Caco-2 (cell line): ENCODE measurements at regions of chr10 and their contacts with region 1.

Region 1: GRCh38 chr10:18699849-18700840 is 40.9 kb downstream of the ARL5B start:
- DNase-seq: no peak
- H3K4me3 ChIP-seq: no peak overlapping the region
- H3K4me3 Mint-ChIP-seq: no peak overlapping the region
- H3K27ac Mint-ChIP-seq: no peak overlapping the region
- H3K4me1 ChIP-seq: 0 out of 2 replicates have a peak, but pooled peaks cover 6% of the 10 kb centered on the region
- H3K4me1 Mint-ChIP-seq: peaks cover 12% of the 10 kb centered on the region
- H3K27me3 ChIP-seq: no peaks in the 10 kb centered on the region
- H3K27me3 Mint-ChIP-seq: no peaks in the 10 kb centered on the region
- CTCF ChIP-seq: no peak

Region 2: GRCh38 chr10:18625886-18626285 is 74.3 kb before region 1 on chr10:
- CTCF ChIA-PET with region 1: no interaction called
- POLR2A ChIA-PET with region 1: no interaction called
- intact Hi-C with region 1: no loop called
- DNase-seq: no peak
- H3K4me3 ChIP-seq: no peak overlapping the region
- H3K4me3 Mint-ChIP-seq: peak overlapping the region; percentile 54
- H3K27ac Mint-ChIP-seq: peak overlapping the region; percentile 57
- H3K4me1 ChIP-seq: peaks cover 52% of the 10 kb centered on the region
- H3K4me1 Mint-ChIP-seq: peaks cover 64% of the 10 kb centered on the region
- H3K27me3 ChIP-seq: no peaks in the 10 kb centered on the region
- H3K27me3 Mint-ChIP-seq: no peaks in the 10 kb centered on the region
- CTCF ChIP-seq: no peak

Region 3: GRCh38 chr10:18666810-18667209 is 33.3 kb before region 1 on chr10:
- CTCF ChIA-PET with region 1: no interaction called
- POLR2A ChIA-PET with region 1: no interaction called
- intact Hi-C with region 1: no loop called
- DNase-seq: no peak
- H3K4me3 ChIP-seq: no peak overlapping the region
- H3K4me3 Mint-ChIP-seq: peak overlapping the region; percentile 37
- H3K27ac Mint-ChIP-seq: peak overlapping the region; percentile 82
- H3K4me1 ChIP-seq: peaks cover 46% of the 10 kb centered on the region
- H3K4me1 Mint-ChIP-seq: peaks cover 36% of the 10 kb centered on the region
- H3K27me3 ChIP-seq: no peaks in the 10 kb centered on the region
- H3K27me3 Mint-ChIP-seq: no peaks in the 10 kb centered on the region
- CTCF ChIP-seq: no peak

Region 4: DNA sequence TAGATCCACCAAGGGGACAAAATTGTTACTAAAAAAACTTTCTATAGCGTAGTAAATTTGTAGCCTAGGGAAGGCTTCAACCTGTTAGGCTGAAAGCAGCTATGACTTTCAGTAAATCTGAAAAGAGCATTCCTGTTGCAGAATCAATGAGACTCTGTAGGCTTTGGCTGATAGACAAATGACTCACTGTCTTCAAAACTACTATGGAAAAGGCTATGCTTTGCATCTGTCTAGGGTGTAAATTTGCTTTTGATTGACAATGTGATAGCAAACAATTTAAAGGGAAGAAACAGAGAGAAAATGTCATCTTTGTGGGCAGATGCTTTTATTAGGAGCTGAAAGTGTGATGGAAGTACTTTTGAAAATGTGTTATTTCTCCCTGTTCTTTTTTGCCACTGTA is 19.7 kb after region 1 on chr10:
- CTCF ChIA-PET with region 1: no interaction called
- POLR2A ChIA-PET with region 1: no interaction called
- intact Hi-C with region 1: loop called (anchors 2 kb)
- DNase-seq: no peak
- H3K4me3 ChIP-seq: no peak overlapping the region
- H3K4me3 Mint-ChIP-seq: no peak overlapping the region
- H3K27ac Mint-ChIP-seq: no peak overlapping the region
- H3K4me1 ChIP-seq: peaks cover 9% of the 10 kb centered on the region
- H3K4me1 Mint-ChIP-seq: peaks cover 31% of the 10 kb centered on the region
- H3K27me3 ChIP-seq: no peaks in the 10 kb centered on the region
- H3K27me3 Mint-ChIP-seq: peaks cover 5% of the 10 kb centered on the region
- CTCF ChIP-seq: no peak